ENCODE measurements at regions of chr9 and their contacts with region 1.

Region 1: DNA sequence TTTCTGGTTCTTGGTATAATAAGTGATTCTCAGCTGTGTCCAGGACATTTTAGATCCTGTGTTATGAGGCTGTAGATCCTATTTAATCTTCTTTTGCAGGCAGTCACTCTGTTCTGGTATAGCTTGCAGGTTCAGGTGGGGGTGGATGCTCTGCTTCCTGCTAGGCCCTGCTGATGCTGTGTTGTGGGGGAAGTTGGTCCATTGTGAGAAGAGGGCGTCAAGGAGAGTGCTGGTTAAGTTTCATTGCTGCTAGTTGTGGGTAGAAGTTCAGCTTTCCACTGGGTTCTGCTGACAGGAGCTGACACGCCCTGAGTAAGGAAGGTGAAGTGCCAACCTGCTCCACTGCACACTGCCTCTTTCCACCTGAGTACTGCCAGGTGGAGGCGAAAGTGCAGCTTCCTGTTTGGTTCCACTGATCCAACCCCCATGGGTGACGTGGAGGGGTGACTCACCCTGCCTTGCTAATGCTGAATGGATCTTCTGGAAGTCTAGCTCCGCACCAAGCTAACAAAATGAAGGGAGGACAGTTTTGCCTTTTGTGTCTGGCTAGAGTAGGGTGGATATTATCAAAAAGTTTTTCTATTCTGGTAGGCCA is 16.3 kb downstream of the NMRK1 start:
- DNase-seq: peak in 3 of 4 experiments; percentile 8 to 51 (median 34)
- ATAC-seq: peak; percentile 80
- H3K4me3 ChIP-seq: no peak overlapping the region
- H3K27ac ChIP-seq: no peak overlapping the region; the same call in 2 of the 3 replicates
- H3K4me1 ChIP-seq: peaks cover 0 to 2% of the 10 kb centered on the region in 2 experiments; a peak in 3 of 5 replicates
- H3K27me3 ChIP-seq: no peaks in the 10 kb centered on the region
- CTCF ChIP-seq: no peak
- EP300 ChIP-seq: no peak
- POLR2A ChIP-seq: no peak
- RAD21 ChIP-seq: no peak

Region 2: DNA sequence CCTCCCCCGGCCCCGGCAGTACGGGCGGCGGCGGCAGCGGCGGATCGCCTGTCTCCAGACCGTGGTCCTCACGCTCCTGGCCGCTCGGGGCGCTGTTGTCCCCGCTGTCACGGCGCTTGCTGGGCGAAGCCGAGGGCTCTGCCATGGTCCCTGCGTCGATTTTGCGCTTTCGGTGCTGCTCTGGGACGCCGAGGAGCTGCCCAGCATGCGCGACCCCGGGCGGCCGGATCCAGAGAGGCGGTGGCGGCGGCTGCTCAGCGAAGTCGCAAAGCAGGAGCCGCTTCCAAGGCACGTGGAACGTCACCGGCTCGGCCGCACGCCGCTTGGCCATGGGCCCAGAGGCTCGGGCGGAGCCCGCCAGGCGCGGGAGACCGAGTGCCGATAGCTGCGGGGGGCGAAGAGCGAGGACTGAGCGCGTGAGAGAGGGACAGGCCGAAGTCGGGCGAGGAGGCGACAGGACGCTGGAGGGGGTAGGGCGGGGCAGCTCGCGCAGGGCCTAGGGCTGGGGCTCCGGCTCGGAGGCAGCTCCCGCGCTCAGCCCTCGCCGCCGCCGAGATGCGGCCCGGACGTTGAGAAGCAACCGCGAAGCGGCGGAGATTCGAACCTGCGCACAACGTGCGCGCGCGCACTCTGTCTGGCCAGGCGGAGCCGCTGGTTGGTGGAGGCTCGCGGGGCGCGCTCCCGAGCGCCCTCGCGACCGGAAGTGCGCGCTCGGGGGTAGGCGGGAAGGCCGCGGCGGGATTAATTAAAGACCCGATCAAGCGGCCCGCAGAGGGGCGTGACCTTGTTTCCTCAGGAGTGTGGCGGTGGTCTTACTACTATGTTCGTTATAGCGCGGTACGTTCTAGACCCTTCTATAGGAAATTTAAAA is 119.1 kb before region 1 on chr9 and contains the start of gene C9orf40:
- CTCF ChIA-PET with region 1: no interaction called
- POLR2A ChIA-PET with region 1: no interaction called
- in situ Hi-C with region 1: no loop called
- intact Hi-C with region 1: loop called (anchors 5 kb)
- DNase-seq: peak; percentile 81 to 93 (median 82)
- ATAC-seq: peak; percentile 90
- H3K4me3 ChIP-seq: peak within 1 kb of the TSS; percentile 84
- H3K27ac ChIP-seq: peak within 1 kb of the TSS; percentile 98
- H3K4me1 ChIP-seq: peaks cover 11 to 15% of the 10 kb centered on the region in 2 experiments; a peak in 4 of 5 replicates
- H3K27me3 ChIP-seq: no peaks in the 10 kb centered on the region
- CTCF ChIP-seq: peak; percentile 60 to 70 (median 67)
- EP300 ChIP-seq: no peak
- POLR2A ChIP-seq: peak; percentile 81
- RAD21 ChIP-seq: 0 out of 4 replicates have a peak, but pooled peaks of 1 of the 2 experiments have one; percentile 17
- polyA plus RNA-seq, gene C9orf40: 5.6 to 5.8 TPM

Measured in K562 (cell line).